ENCODE measurements at regions of chr12 and their contacts with region 1.

Region 1: GRCh38 chr12:122399592-122400373 is 22.7 kb downstream of the CLIP1 start:
- DNase-seq: peak; percentile 66 to 68 (median 67)
- H3K4me3 ChIP-seq: no peak overlapping the region
- H3K4me3 Mint-ChIP-seq: peak overlapping the region; percentile 34 to 81 (median 72)
- H3K27ac ChIP-seq: peak overlapping the region; percentile 18
- H3K27ac Mint-ChIP-seq: peak overlapping the region; percentile 81 to 91 (median 89)
- H3K4me1 ChIP-seq: peaks cover 25% of the 10 kb centered on the region
- H3K4me1 Mint-ChIP-seq: peaks cover 29 to 42% (median 33%) of the 10 kb centered on the region in 4 donors
- H3K27me3 ChIP-seq: no peaks in the 10 kb centered on the region
- H3K27me3 Mint-ChIP-seq: no peaks in the 10 kb centered on the region

Region 2: DNA sequence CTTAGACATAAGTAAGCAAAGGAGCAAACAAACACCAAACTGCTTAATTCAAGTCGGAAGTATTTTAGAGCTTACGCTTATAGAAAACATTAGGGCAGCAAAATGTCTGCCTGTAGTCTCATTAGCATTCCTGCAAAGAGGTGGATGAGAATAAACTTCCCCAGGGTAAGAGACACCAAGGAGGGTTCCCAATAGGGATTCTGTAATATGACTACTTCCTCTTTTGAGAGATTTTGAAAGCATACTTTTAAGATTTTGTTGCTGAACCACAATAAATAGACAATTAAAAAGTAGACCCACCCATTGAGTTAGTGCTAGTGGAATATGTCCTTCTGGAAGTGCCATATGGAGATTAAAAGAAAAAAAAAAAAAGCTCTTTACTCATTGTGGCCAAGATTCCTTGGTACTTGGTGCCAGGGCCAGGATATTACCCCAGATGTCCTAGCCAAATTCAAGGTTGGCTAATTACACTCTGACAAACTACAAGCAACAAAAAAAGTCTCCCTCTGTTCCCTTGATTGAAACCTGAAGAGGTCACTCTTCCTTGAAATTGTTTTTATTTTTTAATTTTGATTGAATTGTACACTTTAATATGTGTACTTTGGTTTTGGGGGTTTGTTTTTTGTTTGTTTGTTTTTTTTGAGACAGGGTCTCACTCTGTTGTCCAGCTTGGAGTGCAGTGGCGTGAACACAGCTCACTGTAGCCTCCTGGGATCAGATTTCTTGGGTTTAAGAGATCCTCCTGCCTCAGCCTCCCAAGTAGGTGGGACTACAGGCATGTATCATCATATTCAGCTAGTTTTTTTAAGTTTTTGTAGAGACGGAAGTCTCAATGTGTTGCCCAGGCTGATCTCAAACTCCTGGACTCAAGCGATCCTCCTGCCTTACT is 14.0 kb after region 1 on chr12:
- CTCF ChIA-PET with region 1: interaction called, 39 read pairs
- POLR2A ChIA-PET with region 1: interaction called, 15 read pairs
- intact Hi-C with region 1: no loop called
- DNase-seq: no peak
- H3K4me3 ChIP-seq: no peak overlapping the region
- H3K4me3 Mint-ChIP-seq: peak overlapping the region in 7 of 8 donors; percentile 17 to 83 (median 69)
- H3K27ac ChIP-seq: no peak overlapping the region
- H3K27ac Mint-ChIP-seq: peak overlapping the region; percentile 35 to 94 (median 90)
- H3K4me1 ChIP-seq: peaks cover 54% of the 10 kb centered on the region
- H3K4me1 Mint-ChIP-seq: peaks cover 26 to 44% (median 34%) of the 10 kb centered on the region in 4 donors
- H3K27me3 ChIP-seq: no peaks in the 10 kb centered on the region
- H3K27me3 Mint-ChIP-seq: no peaks in the 10 kb centered on the region

Region 3: DNA sequence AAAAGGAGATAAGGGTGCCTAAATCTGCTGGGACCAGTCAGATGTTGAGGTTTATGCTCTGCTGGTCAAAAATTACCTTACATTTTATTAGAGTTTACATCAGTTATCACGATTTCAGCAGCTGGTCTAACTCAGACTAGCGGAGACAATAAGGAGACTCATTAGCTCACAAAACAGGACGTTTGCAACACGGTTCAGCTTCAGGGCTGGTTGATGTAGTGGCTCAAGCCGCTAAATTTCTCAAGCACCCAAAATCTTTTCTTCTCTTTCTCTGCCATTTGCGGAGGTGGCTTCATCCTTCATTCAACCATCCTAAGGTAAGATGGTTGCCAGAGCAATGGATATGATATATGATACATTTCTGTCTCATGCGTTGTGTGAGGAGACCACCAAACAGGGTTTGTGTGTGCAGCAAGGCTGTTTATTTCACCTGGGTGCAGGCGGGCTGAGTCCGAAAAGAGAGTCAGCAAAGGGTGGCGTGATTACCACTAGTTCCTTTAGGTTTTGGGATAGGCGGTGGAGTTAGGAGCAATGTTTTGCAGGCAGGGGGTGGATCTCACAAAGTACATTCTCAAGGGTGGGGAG is 53.0 kb after region 1 on chr12:
- CTCF ChIA-PET with region 1: interaction called, 20 read pairs
- POLR2A ChIA-PET with region 1: interaction called, 9 read pairs
- intact Hi-C with region 1: no loop called
- DNase-seq: peak in 2 of 5 donors; percentile 13 to 18
- H3K4me3 ChIP-seq: peak overlapping the region in 1 of 2 donors; percentile 5
- H3K4me3 Mint-ChIP-seq: peak overlapping the region; percentile 32 to 90 (median 84)
- H3K27ac ChIP-seq: peak overlapping the region; percentile 54
- H3K27ac Mint-ChIP-seq: peak overlapping the region; percentile 90 to 99 (median 96)
- H3K4me1 ChIP-seq: peaks cover 31% of the 10 kb centered on the region
- H3K4me1 Mint-ChIP-seq: peaks cover 20 to 41% (median 28%) of the 10 kb centered on the region in 4 donors
- H3K27me3 ChIP-seq: no peaks in the 10 kb centered on the region
- H3K27me3 Mint-ChIP-seq: no peaks in the 10 kb centered on the region

Region 4: DNA sequence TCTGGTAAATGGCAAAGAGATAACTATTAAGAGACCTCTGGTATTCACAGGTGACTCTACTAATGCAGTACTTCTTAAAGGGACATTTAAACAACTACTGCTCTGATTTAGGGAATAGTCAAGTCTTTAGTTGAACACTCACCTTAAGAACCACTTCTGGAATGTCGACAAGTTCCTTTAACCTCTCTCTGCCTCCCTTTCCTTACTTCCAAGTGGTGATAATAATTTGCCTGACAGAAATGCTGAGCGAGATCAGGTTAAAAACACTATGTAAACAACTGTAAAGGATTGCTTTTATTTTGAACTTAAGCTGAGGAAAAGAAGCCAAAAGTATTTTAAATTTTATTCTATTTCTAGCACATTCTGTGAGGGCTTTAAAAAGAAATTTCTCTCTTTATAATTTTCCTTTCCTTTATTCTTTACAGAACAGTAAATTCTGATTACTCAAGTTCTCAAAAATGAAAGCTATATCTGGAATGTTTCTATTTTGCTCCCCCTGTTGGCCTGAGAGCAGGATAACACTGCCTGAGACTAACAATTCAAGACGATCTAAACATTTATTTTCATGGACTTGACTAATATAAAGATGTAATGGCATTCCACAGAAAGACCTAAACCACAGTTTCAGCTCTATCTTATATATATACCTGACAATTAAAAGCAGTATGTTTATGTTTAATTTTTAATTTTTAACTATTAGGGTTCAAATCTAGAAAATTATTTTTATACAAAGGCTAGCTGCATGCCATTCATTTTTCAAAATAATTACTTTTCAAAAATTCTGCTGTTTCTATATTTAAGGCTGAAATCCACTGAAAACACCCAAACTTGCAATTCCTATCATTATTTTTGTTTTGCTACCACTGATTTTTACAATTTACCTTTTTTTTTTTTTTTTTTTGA is 71.8 kb after region 1 on chr12:
- CTCF ChIA-PET with region 1: interaction called, 332 read pairs
- POLR2A ChIA-PET with region 1: interaction called, 62 read pairs
- intact Hi-C with region 1: loop called (anchors 1 kb)
- DNase-seq: peak in 4 of 5 donors; percentile 59 to 65 (median 63)
- H3K4me3 ChIP-seq: no peak overlapping the region
- H3K4me3 Mint-ChIP-seq: no peak overlapping the region
- H3K27ac ChIP-seq: no peak overlapping the region
- H3K27ac Mint-ChIP-seq: peak overlapping the region in 4 of 7 donors; percentile 12 to 65 (median 22)
- H3K4me1 ChIP-seq: no peaks in the 10 kb centered on the region
- H3K4me1 Mint-ChIP-seq: peaks cover 4 to 11% (median 9%) of the 10 kb centered on the region in 4 donors
- H3K27me3 ChIP-seq: no peaks in the 10 kb centered on the region
- H3K27me3 Mint-ChIP-seq: no peaks in the 10 kb centered on the region

Region 5: DNA sequence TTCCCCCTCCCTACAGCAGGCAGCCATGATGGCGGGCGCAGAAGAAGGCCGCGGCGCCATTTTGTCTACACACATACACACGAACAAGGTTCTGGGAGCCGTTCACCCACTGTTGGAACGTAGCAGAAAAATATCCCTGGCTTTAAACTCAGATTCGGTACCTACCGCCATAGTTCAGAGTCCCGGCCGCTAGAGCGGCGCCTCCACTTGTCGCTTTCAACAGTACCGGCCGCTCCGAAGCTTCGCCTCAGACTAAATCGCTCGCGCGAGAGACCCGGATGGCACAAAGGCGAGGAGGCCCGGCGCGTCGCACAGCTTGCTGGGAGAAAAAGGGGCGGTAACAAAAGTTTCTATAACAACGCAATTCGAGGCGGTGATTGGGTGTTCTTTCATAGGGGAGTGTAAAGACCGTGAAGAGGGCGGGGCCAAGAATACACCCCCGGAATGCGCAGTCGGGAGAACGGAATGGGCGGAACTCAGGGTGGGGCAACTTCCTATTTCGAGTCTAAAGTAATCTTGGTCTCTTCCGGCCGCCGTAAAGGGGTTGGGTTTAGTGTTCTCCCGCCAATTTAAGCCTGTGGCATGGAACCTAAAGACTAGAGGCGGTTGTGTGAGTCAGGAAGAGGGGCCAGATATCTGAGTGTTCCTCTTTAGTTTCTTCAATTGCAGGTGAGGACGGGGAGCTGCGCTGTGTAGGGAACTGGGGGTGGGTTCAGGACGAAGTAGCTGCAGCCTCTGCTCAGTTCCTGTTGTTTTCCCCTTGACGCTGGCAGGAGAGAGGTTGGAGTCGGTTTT is 127.1 kb after region 1 on chr12 and contains the starts of genes KNTC1 and RSRC2:
- CTCF ChIA-PET with region 1: interaction called, 4 read pairs
- POLR2A ChIA-PET with region 1: interaction called, 4 read pairs
- intact Hi-C with region 1: loop called (anchors 1 kb)
- DNase-seq: peak; percentile 98 to 99 (median 99)
- H3K4me3 ChIP-seq: peak within 1 kb of the TSS; percentile 85 to 88
- H3K4me3 Mint-ChIP-seq: no peak within 1 kb of the TSS
- H3K27ac ChIP-seq: peak within 1 kb of the TSS; percentile 98
- H3K27ac Mint-ChIP-seq: no peak within 1 kb of the TSS
- H3K4me1 ChIP-seq: peaks cover 52% of the 10 kb centered on the region
- H3K4me1 Mint-ChIP-seq: peaks cover 22 to 37% (median 30%) of the 10 kb centered on the region in 4 donors
- H3K27me3 ChIP-seq: no peaks in the 10 kb centered on the region
- H3K27me3 Mint-ChIP-seq: no peaks in the 10 kb centered on the region
- total RNA-seq, gene KNTC1: 29.7 to 30.9 TPM
- total RNA-seq, gene RSRC2: 138 to 141 TPM